ENCODE measurements at regions of chr19 and their contacts with region 1.

Region 1: DNA sequence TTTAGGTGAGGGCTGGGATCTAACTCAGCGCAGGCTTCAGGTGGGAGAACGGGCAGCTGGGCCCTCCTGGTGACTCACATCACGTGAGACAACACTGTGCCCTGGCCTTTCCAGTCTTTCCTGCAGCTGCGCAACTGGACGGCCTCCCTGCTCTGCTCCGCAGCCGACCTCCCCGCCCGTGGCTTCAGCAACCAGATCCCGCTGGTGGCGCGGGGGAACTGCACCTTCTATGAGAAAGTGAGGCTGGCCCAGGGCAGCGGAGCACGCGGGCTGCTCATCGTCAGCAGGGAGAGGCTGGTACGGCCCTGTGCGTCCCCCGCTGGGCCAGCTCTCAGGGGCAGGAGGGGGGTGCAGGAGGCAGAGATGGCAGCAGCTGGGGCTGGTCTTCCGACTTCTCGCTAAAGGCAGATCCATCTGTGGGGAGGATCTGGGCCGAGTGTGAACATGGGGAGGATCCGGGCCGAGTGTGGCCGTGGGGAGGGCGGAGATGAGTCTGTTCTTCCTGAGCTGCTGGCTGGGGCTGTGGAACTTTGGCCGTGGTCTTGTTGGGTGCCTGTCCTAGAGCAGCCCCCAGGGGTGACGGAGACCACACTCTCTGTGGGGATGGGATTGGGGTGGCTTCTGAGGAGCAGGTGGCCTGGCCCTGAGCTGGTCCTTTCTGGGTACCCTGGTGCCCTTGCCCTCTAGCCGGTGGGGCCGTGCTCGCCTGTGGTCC is 9.0 kb downstream of the SPPL2B start:
- DNase-seq: peak; percentile 44 to 73
- ATAC-seq: peak; percentile 21 to 59 (median 47)
- H3K4me3 ChIP-seq: no peak overlapping the region
- H3K27ac ChIP-seq: no peak overlapping the region
- H3K4me1 ChIP-seq: peaks cover 11% of the 10 kb centered on the region
- H3K27me3 ChIP-seq: no peaks in the 10 kb centered on the region
- CTCF ChIP-seq: peak; percentile 27

Region 2: GRCh38 chr19:2375341-2376121 is 38.0 kb after region 1 on chr19:
- intact Hi-C with region 1: loop called in 1 of 2 experiments (anchors 5 kb)
- DNase-seq: no peak
- ATAC-seq: peak; percentile 14 to 44 (median 36)
- H3K4me3 ChIP-seq: no peak overlapping the region
- H3K27ac ChIP-seq: no peak overlapping the region
- H3K4me1 ChIP-seq: peaks cover 7% of the 10 kb centered on the region
- H3K27me3 ChIP-seq: no peaks in the 10 kb centered on the region
- CTCF ChIP-seq: no peak

Region 3: DNA sequence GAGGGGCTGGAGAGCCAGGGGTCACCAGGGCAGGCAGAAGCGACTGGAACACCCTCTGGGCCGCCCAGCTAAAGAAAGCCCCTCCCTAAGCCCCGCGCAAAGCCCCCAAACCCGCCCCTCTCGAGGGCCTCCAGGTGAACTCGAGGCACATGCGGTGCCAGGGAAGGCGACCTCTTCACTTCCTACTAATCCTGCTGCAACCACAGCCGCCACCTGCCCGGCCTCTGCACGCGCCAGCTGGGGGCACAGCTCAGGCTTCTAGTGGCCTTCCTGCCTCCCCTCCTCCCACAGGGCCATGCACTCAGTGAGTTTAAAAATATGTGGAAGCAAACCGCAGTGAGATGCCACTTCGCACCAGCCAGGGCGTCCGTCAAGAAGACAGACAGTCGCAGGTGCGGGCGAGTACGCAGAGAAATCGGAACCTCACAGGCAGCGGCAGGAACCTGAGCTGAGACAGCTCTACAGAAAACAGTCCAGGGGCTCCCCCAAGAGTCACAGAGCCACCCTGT is 108.8 kb after region 1 on chr19:
- intact Hi-C with region 1: no loop called
- DNase-seq: peak; percentile 88 to 96
- ATAC-seq: peak; percentile 96 to 97 (median 97)
- H3K4me3 ChIP-seq: no peak overlapping the region
- H3K27ac ChIP-seq: peak overlapping the region; percentile 78
- H3K4me1 ChIP-seq: peaks cover 4% of the 10 kb centered on the region
- H3K27me3 ChIP-seq: no peaks in the 10 kb centered on the region
- CTCF ChIP-seq: no peak

Measured in psoas muscle (tissue), 8 donors.